ENCODE measurements at regions of chr6 and their contacts with region 1.

Region 1: DNA sequence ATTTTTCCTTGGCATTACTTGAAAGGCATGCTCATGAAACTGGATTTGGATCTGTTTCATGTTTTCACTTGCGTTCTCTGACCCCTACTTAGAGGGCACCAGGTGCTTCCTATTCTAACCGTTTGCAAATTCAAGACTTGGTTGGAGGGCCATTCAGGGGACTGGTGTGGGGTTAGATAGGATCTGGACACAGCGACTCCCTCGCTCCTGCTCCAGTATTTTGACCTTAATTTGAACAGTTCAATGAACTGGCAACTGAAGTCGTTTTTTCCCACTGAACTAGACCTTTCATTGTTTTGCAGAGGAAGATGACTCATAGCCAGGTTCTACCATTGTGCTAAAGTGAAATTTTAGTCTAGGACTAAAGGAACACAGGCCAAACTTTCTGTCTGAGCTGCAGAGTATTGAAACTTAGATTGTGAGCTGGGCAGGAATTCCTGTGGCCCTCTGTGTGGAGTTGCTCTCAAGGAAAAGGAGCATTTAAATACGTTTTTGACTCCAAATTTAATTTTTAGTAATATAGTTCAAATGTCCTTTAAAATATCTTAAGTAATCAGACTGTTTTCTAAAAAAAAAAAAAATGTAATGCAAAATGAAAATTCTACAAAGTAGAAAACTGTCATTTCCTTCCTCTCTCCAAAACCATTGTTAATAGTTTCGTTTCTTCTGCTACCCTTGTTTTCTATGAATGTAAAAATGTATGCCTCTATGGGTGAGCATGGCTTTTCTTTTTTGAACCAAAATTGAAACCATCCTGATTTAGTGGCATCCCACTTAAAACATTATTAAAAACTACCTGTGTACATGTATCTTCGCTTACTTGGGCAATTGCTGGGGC is 64.8 kb downstream of the UTRN start:
- DNase-seq: no peak
- H3K4me3 Mint-ChIP-seq: peak overlapping the region; percentile 59
- H3K27ac Mint-ChIP-seq: peak overlapping the region; percentile 82
- H3K4me1 Mint-ChIP-seq: peaks cover 85% of the 10 kb centered on the region
- H3K27me3 Mint-ChIP-seq: no peaks in the 10 kb centered on the region

Region 2: DNA sequence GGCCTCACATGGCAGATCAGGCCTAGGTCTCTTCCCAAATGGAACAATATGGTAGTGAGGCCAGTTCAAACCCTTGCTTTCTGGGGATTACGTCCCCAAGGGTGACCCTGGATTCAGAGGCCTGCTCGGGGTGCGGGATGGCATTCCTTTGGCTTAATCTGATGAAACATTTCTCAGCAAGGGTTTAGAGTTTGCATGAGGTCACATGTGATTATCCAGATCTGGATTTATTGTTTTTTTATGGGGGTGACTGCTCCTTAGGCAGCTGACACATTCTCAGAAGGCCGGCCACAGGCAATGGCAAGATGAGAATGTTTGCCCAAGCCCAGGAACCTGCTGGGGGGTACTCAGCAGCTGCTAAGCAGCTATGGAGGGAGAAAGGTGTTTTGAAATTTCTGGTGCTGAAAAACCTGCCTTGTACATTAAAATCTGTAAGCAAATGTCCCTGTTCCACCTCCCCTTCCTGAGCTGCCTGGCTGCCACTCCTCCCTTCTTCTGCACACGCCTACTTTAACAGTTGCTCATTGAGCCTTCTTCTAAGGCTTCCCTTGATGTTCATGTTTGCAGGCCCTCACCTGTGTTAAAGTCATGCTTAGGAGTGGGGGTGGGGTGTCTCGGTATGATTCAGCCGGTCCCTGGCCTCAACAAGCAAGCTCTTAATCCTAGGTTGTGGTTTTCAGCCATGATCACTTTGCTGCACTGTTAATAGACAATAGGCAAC is 800.5 kb before region 1 on chr6:
- CTCF ChIA-PET with region 1: no interaction called
- POLR2A ChIA-PET with region 1: no interaction called
- intact Hi-C with region 1: loop called (anchors 10 kb)
- DNase-seq: peak; percentile 83
- H3K4me3 Mint-ChIP-seq: no peak overlapping the region
- H3K27ac Mint-ChIP-seq: peak overlapping the region; percentile 63
- H3K4me1 Mint-ChIP-seq: peaks cover 90% of the 10 kb centered on the region
- H3K27me3 Mint-ChIP-seq: no peaks in the 10 kb centered on the region

Region 3: GRCh38 chr6:144334131-144334708 is 15.7 kb before region 1 on chr6:
- CTCF ChIA-PET with region 1: no interaction called
- POLR2A ChIA-PET with region 1: interaction called, 3 read pairs
- intact Hi-C with region 1: loop called (anchors 2 kb)
- DNase-seq: peak; percentile 84
- H3K4me3 Mint-ChIP-seq: peak overlapping the region; percentile 67
- H3K27ac Mint-ChIP-seq: peak overlapping the region; percentile 67
- H3K4me1 Mint-ChIP-seq: peaks cover 40% of the 10 kb centered on the region
- H3K27me3 Mint-ChIP-seq: no peaks in the 10 kb centered on the region

Region 4: GRCh38 chr6:144362042-144363018 is 12.4 kb after region 1 on chr6:
- CTCF ChIA-PET with region 1: interaction called, 5 read pairs
- POLR2A ChIA-PET with region 1: interaction called, 5 read pairs
- intact Hi-C with region 1: loop called (anchors 1 kb)
- DNase-seq: no peak
- H3K4me3 Mint-ChIP-seq: no peak overlapping the region
- H3K27ac Mint-ChIP-seq: peak overlapping the region; percentile 13
- H3K4me1 Mint-ChIP-seq: peaks cover 65% of the 10 kb centered on the region
- H3K27me3 Mint-ChIP-seq: no peaks in the 10 kb centered on the region

Region 5: GRCh38 chr6:144395014-144395413 is 45.1 kb after region 1 on chr6:
- CTCF ChIA-PET with region 1: no interaction called
- POLR2A ChIA-PET with region 1: no interaction called
- intact Hi-C with region 1: loop called (anchors 5 kb)
- DNase-seq: no peak
- H3K4me3 Mint-ChIP-seq: no peak overlapping the region
- H3K27ac Mint-ChIP-seq: no peak overlapping the region
- H3K4me1 Mint-ChIP-seq: peaks cover 39% of the 10 kb centered on the region
- H3K27me3 Mint-ChIP-seq: no peaks in the 10 kb centered on the region

Region 6: GRCh38 chr6:144411332-144412190 is 61.7 kb after region 1 on chr6:
- CTCF ChIA-PET with region 1: no interaction called
- POLR2A ChIA-PET with region 1: no interaction called
- intact Hi-C with region 1: loop called (anchors 5 kb)
- DNase-seq: no peak
- H3K4me3 Mint-ChIP-seq: peak overlapping the region; percentile 62
- H3K27ac Mint-ChIP-seq: peak overlapping the region; percentile 57
- H3K4me1 Mint-ChIP-seq: peaks cover 54% of the 10 kb centered on the region
- H3K27me3 Mint-ChIP-seq: no peaks in the 10 kb centered on the region

Region 7: GRCh38 chr6:144447472-144447871 is 97.6 kb after region 1 on chr6:
- CTCF ChIA-PET with region 1: no interaction called
- POLR2A ChIA-PET with region 1: no interaction called
- intact Hi-C with region 1: no loop called
- DNase-seq: no peak
- H3K4me3 Mint-ChIP-seq: no peak overlapping the region
- H3K27ac Mint-ChIP-seq: no peak overlapping the region
- H3K4me1 Mint-ChIP-seq: peaks cover 2% of the 10 kb centered on the region
- H3K27me3 Mint-ChIP-seq: no peaks in the 10 kb centered on the region

Region 8: GRCh38 chr6:145015739-145016558 is 666.0 kb after region 1 on chr6:
- CTCF ChIA-PET with region 1: no interaction called
- POLR2A ChIA-PET with region 1: no interaction called
- intact Hi-C with region 1: loop called (anchors 10 kb)
- DNase-seq: peak; percentile 53
- H3K4me3 Mint-ChIP-seq: no peak overlapping the region
- H3K27ac Mint-ChIP-seq: no peak overlapping the region
- H3K4me1 Mint-ChIP-seq: peaks cover 11% of the 10 kb centered on the region
- H3K27me3 Mint-ChIP-seq: peaks cover 4% of the 10 kb centered on the region